Posterior vena cava (tissue), 2 donors: ENCODE measurements at regions of chr6 and their contacts with region 1.

Region 1: GRCh38 chr6:72689107-72689954 is 67.5 kb downstream of the KCNQ5 start:
- DNase-seq: no peak

Region 2: DNA sequence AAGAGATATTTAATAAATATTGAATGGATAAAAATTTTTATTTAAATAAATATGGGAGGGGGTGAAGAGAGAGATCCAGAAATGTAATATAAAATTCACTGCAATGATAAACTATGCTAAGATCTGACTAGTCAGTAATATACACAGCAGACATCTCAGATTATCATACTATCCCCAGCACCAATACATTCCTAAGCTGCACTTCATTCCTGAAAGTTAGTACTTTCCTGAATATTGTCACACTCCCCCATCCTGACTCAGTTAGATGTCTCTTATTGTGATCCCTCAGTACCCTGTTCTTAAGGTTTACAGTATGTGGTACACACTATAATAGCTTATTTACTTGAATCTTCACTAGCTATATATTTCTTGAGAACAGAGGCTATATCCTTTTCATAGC is 155.7 kb before region 1 on chr6:
- intact Hi-C with region 1: loop called in 1 of 2 experiments (anchors 5 kb)
- DNase-seq: no peak